ENCODE measurements at regions of chr3 and their contacts with region 1.

Region 1: GRCh38 chr3:73018790-73019441 is 22.3 kb downstream of the PPP4R2 start:
- DNase-seq: no peak
- CTCF ChIP-seq: no peak

Region 2: DNA sequence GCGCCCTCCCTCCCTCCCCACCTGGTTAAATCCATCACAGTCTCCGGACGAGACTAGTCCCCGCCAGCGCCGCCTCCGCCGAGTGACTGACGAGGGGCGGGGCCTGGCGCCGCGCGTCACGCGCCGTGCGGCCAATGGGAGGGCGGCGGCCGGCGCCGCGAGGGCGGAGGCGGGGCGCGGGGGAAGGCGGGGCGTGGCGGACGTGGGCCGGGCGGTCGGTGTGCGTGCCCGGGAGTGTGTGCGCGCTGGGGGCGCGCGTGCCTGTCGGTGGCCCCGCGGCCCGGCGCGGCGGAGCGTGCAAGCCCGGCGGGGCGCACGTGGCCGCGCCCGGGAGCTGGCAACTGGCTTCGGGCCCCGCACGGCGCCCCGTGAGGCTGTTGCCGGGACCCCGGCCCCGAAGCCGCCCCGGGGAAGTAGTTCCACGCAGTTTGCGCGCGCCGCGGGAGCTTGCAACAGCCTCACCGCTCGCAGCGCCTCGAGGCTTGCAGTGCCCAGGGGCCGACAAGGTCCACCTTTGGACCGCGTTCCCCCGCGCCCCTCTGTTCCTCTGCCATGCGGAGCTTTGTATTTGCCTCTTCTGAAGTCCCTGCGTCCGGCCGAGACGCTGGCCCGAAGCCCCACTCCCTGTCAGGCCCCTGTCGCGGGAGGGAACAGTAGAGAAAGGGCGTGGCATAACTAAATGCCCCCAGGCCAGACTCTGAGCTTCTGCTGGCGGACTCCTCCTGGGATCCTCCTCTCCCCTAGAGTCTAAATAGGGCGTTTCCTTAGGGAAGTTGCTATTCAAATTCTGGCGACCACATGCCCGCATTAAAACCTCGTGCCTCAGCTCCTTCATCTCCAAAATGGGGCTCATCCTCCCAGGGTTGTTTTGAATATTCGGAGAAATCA is 571.6 kb before region 1 on chr3:
- CTCF ChIA-PET with region 1: no interaction called
- POLR2A ChIA-PET with region 1: no interaction called
- DNase-seq: peak; percentile 95
- CTCF ChIP-seq: no peak

Region 3: GRCh38 chr3:72634128-72634527 is 384.8 kb before region 1 on chr3:
- CTCF ChIA-PET with region 1: no interaction called
- POLR2A ChIA-PET with region 1: no interaction called
- DNase-seq: peak; percentile 43
- CTCF ChIP-seq: no peak

Region 4: GRCh38 chr3:73030073-73030597 is 11.2 kb after region 1 on chr3:
- CTCF ChIA-PET with region 1: interaction called, 10 read pairs
- POLR2A ChIA-PET with region 1: no interaction called
- DNase-seq: no peak
- CTCF ChIP-seq: no peak

Region 5: GRCh38 chr3:73072634-73073033 is 53.7 kb after region 1 on chr3:
- CTCF ChIA-PET with region 1: no interaction called
- POLR2A ChIA-PET with region 1: no interaction called
- DNase-seq: no peak
- CTCF ChIP-seq: no peak

Region 6: GRCh38 chr3:73136941-73137340 is 118.0 kb after region 1 on chr3:
- CTCF ChIA-PET with region 1: no interaction called
- POLR2A ChIA-PET with region 1: no interaction called
- DNase-seq: no peak
- CTCF ChIP-seq: no peak

Measured in GM10248 (cell line).